PC-3 (cell line): ENCODE measurements at regions of chr7 and their contacts with region 1.

Region 1: GRCh38 chr7:117750612-117751563 is 122.4 kb downstream of the CTTNBP2 start:
- DNase-seq: peak; percentile 48
- ATAC-seq: peak; percentile 24; the same call in 1 of the 2 replicates
- H3K4me3 ChIP-seq: no peak overlapping the region
- H3K27ac ChIP-seq: no peak overlapping the region
- H3K4me1 ChIP-seq: no peaks in the 10 kb centered on the region; the same call in 1 of the 2 replicates
- H3K27me3 ChIP-seq: no peaks in the 10 kb centered on the region
- CTCF ChIP-seq: peak; percentile 71

Region 2: DNA sequence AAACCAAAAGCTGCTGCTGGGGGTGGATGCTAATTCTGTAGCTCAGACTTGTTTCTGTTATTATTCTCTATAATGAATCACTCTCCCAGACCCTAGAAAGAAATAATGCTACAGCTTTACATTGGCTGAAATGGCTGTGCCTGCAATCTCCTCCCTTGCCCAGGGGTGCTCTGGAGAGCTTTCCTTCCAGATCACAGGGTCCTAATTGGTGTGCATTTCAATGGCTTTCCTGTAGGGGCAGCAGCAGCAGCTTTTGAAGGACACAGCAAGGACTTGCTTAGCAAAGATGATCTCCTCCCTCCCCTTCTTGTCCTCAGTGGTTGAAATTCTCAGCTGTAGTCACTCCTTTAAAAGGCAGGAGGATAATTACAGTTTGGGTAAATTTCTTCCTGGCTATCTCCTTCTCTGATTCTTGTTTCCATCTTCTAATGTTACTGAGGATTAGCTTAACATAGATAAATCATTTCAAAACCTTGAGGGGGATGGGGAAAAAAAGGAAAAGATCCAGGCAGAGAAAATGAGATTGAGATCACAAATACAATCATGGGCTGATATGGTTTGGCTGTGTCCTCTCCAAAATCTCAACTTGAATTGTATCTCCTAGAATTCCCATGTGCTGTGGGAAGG is 242.6 kb after region 1 on chr7:
- CTCF ChIA-PET with region 1: no interaction called
- POLR2A ChIA-PET with region 1: no interaction called
- intact Hi-C with region 1: loop called (anchors 5 kb)
- DNase-seq: peak; percentile 65
- ATAC-seq: peak; percentile 48
- H3K4me3 ChIP-seq: no peak overlapping the region
- H3K27ac ChIP-seq: no peak overlapping the region
- H3K4me1 ChIP-seq: peaks cover 27% of the 10 kb centered on the region
- H3K27me3 ChIP-seq: no peaks in the 10 kb centered on the region
- CTCF ChIP-seq: peak; percentile 65; the same call in 1 of the 2 replicates

Region 3: DNA sequence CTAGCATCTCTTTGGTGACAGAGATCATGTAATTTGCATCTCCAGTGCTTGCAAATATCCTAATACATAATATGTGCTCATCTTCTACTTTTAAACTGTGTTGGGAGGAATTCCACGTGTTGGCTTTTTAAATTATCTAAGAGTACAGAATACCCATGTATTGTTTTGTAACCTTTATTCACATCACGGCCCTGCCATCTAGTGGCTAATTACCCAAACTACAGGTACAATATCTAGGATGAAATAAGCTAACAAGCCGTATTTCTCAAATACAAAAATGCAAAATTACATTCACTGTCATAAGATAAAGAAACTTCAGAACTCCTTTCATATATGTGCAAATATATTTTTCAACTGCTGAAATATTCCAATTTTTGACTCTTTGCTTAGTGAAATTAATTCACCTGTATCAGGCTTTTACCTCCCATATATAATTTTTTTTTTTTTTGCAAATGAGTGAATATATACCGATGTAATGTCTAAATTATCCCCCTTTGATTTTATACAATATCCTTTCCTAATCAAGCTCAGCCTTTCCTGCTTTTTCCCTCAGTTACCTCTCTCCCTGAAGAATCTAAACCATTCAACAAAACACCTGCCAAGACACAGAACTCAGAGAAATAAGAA is 402.8 kb after region 1 on chr7:
- CTCF ChIA-PET with region 1: interaction called, 3 read pairs
- POLR2A ChIA-PET with region 1: no interaction called
- intact Hi-C with region 1: loop called (anchors 2 kb)
- DNase-seq: peak; percentile 67
- ATAC-seq: no peak
- H3K4me3 ChIP-seq: no peak overlapping the region
- H3K27ac ChIP-seq: no peak overlapping the region
- H3K4me1 ChIP-seq: no peaks in the 10 kb centered on the region
- H3K27me3 ChIP-seq: no peaks in the 10 kb centered on the region
- CTCF ChIP-seq: peak; percentile 79

Region 4: GRCh38 chr7:118195837-118196474 is 445.1 kb after region 1 on chr7:
- CTCF ChIA-PET with region 1: no interaction called
- POLR2A ChIA-PET with region 1: no interaction called
- intact Hi-C with region 1: loop called (anchors 2 kb)
- DNase-seq: peak; percentile 77
- ATAC-seq: peak; percentile 83
- H3K4me3 ChIP-seq: no peak overlapping the region
- H3K27ac ChIP-seq: no peak overlapping the region
- H3K4me1 ChIP-seq: no peaks in the 10 kb centered on the region
- H3K27me3 ChIP-seq: no peaks in the 10 kb centered on the region
- CTCF ChIP-seq: peak; percentile 83